ENCODE measurements at regions of chr7 and their contacts with region 1.

Region 1: DNA sequence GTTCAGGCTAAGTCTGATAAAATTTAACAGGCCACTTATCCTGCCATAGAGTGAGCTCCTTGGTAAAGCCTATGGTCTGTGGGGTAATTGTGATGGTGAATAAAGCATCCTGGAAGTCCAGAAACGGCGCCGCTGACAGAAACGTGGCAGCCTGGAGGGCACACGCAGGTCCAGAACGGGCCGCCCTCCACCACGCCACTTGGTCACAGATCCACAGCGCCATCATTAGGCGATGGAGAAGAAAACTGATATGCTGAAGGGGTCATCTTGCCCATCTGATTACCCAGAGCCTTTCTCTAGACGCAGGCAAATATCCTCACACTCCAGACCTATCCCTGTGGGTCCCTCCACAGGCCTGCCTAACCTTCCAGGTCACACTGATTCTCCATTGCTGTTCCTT is 37.8 kb downstream of the PODXL start:
- DNase-seq: no peak
- ATAC-seq: no peak
- H3K4me3 ChIP-seq: no peak overlapping the region
- H3K27ac ChIP-seq: peak overlapping the region; percentile 0 to 83 (median 68)
- H3K4me1 ChIP-seq: peaks cover 0 to 74% (median 40%) of the 10 kb centered on the region in 12 donors
- H3K27me3 ChIP-seq: no peaks in the 10 kb centered on the region
- CTCF ChIP-seq: no peak
- POLR2A ChIP-seq: no peak

Region 2: DNA sequence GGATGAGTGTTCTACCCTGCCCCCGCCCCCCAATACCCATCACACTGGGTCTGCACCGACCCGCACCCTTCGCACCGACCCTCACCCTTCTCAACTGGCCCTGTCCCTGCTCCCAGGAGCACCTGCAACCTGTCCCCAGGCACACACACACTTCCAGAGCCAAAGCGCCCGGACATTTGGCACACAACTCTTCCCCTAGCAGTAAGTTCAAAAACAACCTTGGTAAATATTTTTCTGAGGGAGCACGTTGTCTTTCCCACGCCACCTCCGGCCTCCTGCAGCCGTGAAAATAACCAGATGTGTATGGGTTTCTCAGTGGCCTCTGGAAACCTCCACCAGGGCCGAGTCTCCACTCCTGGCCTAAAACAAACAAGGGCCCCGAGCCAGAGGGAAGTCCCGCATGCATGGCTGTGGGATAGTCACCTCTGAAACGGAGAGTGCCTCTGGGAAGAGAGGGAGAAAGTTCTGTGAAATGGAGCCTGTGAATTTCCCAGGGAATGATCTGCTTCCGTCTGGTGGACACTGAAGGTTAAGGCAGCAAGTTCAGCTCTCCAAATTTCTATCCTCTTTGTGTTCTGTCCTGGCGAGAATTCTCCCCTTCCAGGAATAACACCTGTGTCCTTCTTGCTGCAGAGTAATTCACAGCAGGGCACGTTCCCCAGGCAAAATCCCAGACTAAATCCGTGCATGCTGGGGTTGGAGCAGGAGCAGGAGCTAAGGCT is 22.0 kb after region 1 on chr7:
- intact Hi-C with region 1: loop called in 2 of 10 experiments (anchors 2 to 5 kb)
- DNase-seq: no peak
- ATAC-seq: peak in 2 of 4 donors; percentile 2 to 5
- H3K4me3 ChIP-seq: peak overlapping the region in 3 of 12 donors; percentile 0 to 1 (median 1)
- H3K27ac ChIP-seq: peak overlapping the region; percentile 56 to 92 (median 76)
- H3K4me1 ChIP-seq: peaks cover 17 to 99% (median 79%) of the 10 kb centered on the region in 12 donors
- H3K27me3 ChIP-seq: no peaks in the 10 kb centered on the region
- CTCF ChIP-seq: peak in 11 of 12 donors; percentile 20 to 47 (median 36)
- POLR2A ChIP-seq: no peak

Measured in heart left ventricle (tissue), 16 donors.